ENCODE measurements at regions of chr12 and their contacts with region 1.

Region 1: GRCh38 chr12:107093417-107094182 is at the start of gene CRY1:
- DNase-seq: peak; percentile 94
- H3K4me3 Mint-ChIP-seq: no peak within 1 kb of the TSS
- H3K27ac Mint-ChIP-seq: no peak within 1 kb of the TSS
- H3K4me1 Mint-ChIP-seq: peaks cover 9% of the 10 kb centered on the region
- H3K27me3 Mint-ChIP-seq: peaks cover 4% of the 10 kb centered on the region
- total RNA-seq, gene CRY1: 16.4 to 16.6 TPM

Region 2: GRCh38 chr12:106955377-106956047 is 138.1 kb before region 1 on chr12 and contains the start of gene TMEM263:
- CTCF ChIA-PET with region 1: interaction called, 4 read pairs
- POLR2A ChIA-PET with region 1: interaction called, 10 read pairs
- DNase-seq: peak; percentile 89
- H3K4me3 Mint-ChIP-seq: peak within 1 kb of the TSS; percentile 94
- H3K27ac Mint-ChIP-seq: peak within 1 kb of the TSS; percentile 81
- H3K4me1 Mint-ChIP-seq: peaks cover 20% of the 10 kb centered on the region
- H3K27me3 Mint-ChIP-seq: peaks cover 6% of the 10 kb centered on the region
- total RNA-seq, gene TMEM263: 26.0 to 27.0 TPM

Region 3: DNA sequence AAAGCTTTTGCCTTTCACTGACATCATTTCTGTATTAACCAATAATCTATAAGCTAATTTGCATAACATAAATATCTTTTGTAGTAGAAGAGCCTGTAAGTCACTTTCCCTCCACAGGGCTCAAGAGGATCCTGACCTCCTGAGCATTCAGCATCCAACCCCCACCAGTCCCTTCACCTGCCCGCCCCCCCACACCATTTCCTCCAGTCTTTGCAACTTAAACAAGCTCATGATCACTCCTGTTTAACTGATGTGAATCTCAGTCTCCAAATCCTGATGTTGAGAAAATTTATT is 11.8 kb after region 1 on chr12:
- CTCF ChIA-PET with region 1: interaction called, 21 read pairs
- POLR2A ChIA-PET with region 1: interaction called, 13 read pairs
- DNase-seq: no peak
- H3K4me3 Mint-ChIP-seq: no peak overlapping the region
- H3K27ac Mint-ChIP-seq: no peak overlapping the region
- H3K4me1 Mint-ChIP-seq: peaks cover 15% of the 10 kb centered on the region
- H3K27me3 Mint-ChIP-seq: peaks cover 4% of the 10 kb centered on the region

Region 4: GRCh38 chr12:107122452-107122958 is 28.9 kb after region 1 on chr12:
- CTCF ChIA-PET with region 1: no interaction called
- POLR2A ChIA-PET with region 1: no interaction called
- DNase-seq: no peak
- H3K4me3 Mint-ChIP-seq: no peak overlapping the region
- H3K27ac Mint-ChIP-seq: no peak overlapping the region
- H3K4me1 Mint-ChIP-seq: no peaks in the 10 kb centered on the region
- H3K27me3 Mint-ChIP-seq: peaks cover 29% of the 10 kb centered on the region

Measured in activated CD4-positive, alpha-beta memory T cell treated with anti-CD3 and anti-CD28 coated beads, Interleukin-2, amount 10 ng/mL, durations not matched to agents 7 days and 5 days (primary cell).